ENCODE measurements at regions of chr1 and their contacts with region 1.

Region 1: DNA sequence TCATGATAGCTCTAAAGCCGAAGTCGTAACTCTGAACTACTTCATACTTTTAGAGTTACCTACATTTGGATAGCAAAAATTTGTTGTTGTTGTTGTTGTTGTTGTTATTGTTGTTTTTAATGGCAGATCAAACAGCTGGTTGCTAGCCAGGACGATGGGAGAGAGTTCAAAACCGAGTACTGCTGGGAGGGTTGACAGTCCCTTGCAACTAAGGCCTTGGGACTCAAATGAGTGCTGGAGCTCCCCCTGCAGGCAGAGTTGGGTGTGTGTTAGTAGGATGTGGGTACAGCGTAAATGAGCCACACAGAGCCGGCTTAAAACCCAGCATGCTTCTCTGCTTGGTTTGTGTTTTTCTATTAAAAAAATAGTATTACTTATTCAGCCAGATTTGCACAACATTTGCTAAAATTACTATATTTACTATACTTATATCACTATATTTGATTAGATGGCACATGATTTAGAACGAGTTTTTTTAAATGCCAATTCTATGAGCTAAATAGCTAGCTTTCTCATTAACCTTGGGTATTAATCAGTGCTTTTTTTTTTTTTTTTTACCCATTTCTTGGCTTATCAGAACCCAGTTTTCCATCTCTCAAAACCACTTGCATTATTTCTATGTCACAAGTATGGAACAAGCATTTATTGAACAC is 129.2 kb upstream of the SYT6 start:
- DNase-seq: peak; percentile 93
- H3K4me3 Mint-ChIP-seq: no peak overlapping the region
- H3K27ac Mint-ChIP-seq: no peak overlapping the region
- H3K4me1 Mint-ChIP-seq: no peaks in the 10 kb centered on the region
- H3K27me3 Mint-ChIP-seq: peaks cover 10% of the 10 kb centered on the region

Region 2: GRCh38 chr1:113835642-113836307 is 447.1 kb before region 1 on chr1:
- intact Hi-C with region 1: loop called (anchors 5 kb)
- DNase-seq: peak; percentile 72
- H3K4me3 Mint-ChIP-seq: no peak overlapping the region
- H3K27ac Mint-ChIP-seq: no peak overlapping the region
- H3K4me1 Mint-ChIP-seq: peaks cover 4% of the 10 kb centered on the region
- H3K27me3 Mint-ChIP-seq: no peaks in the 10 kb centered on the region

Measured in activated CD4-positive, alpha-beta T cell treated with anti-CD3 and anti-CD28 coated beads, Interleukin-2, amount 10 ng/mL, durations not matched to agents 24 days and 14 days (primary cell).